Activated CD8-positive, alpha-beta T cell treated with anti-CD3 and anti-CD28 coated beads for 36 hours (primary cell): ENCODE measurements at regions of chr5 and their contacts with region 1.

Region 1: GRCh38 chr5:180831139-180832048 is 28.8 kb upstream of the MGAT1 start:
- DNase-seq: peak; percentile 83
- ATAC-seq: peak; percentile 72
- H3K4me3 Mint-ChIP-seq: peak overlapping the region; percentile 98
- H3K27ac Mint-ChIP-seq: peak overlapping the region; percentile 97
- H3K4me1 Mint-ChIP-seq: peaks cover 39% of the 10 kb centered on the region
- H3K27me3 Mint-ChIP-seq: no peaks in the 10 kb centered on the region
- CTCF ChIP-seq: no peak

Region 2: GRCh38 chr5:180704368-180704869 is 127.0 kb before region 1 on chr5:
- CTCF ChIA-PET with region 1: no interaction called
- POLR2A ChIA-PET with region 1: no interaction called
- intact Hi-C with region 1: no loop called
- DNase-seq: no peak
- ATAC-seq: no peak
- H3K4me3 Mint-ChIP-seq: no peak overlapping the region
- H3K27ac Mint-ChIP-seq: no peak overlapping the region
- H3K4me1 Mint-ChIP-seq: peaks cover 7% of the 10 kb centered on the region
- H3K27me3 Mint-ChIP-seq: no peaks in the 10 kb centered on the region
- CTCF ChIP-seq: no peak

Region 3: DNA sequence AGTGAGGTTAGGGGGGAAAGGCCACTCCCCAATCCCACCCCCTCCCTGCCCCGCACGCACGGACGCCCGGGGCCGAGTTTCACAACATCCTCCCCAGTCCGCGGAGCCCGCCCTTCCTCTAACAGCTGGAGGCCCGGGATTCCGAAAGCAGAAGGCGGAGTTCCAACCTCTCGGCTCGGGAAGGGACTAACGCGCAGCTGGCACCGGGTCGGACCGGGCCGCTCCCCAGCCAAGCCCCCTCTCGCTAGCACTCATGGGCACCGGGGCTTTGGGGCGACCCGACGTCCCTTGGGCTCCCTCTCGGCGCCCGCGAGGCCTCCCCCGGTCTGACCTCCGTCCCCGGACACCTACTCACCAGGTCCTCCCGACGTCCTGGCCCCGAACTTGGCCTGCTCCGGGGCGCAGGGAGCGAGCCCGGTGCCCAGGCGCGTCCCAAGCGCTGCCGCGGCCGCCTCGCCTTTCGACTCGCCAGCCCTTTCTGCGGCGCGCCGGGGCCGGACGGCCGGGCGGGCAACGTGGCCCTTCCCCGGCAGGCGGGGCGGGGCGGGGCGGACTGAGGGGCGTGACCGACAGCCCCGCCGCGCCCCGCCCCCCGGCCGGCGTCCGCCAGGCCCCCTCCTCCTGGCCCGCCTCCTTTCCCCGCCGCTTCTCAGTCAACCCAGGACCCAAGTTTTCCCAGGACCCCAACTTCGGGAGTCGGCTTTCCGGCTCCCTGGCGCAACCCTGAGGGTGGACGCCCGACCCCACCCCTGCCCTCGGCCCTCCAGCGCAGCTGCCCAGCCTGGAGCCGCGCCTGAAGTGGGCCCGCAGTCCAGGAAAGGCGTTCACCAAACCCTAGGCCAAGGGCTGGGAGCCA is 28.8 kb before region 1 on chr5 and contains the start of gene MGAT1:
- CTCF ChIA-PET with region 1: interaction called, 10 read pairs
- POLR2A ChIA-PET with region 1: interaction called, 87 read pairs
- intact Hi-C with region 1: loop called (anchors 5 kb)
- DNase-seq: peak; percentile 85
- ATAC-seq: peak; percentile 56
- H3K4me3 Mint-ChIP-seq: peak within 1 kb of the TSS; percentile 88
- H3K27ac Mint-ChIP-seq: peak within 1 kb of the TSS; percentile 99
- H3K4me1 Mint-ChIP-seq: peaks cover 70% of the 10 kb centered on the region
- H3K27me3 Mint-ChIP-seq: no peaks in the 10 kb centered on the region
- CTCF ChIP-seq: no peak
- total RNA-seq, gene MGAT1: 161 to 171 TPM

Region 4: DNA sequence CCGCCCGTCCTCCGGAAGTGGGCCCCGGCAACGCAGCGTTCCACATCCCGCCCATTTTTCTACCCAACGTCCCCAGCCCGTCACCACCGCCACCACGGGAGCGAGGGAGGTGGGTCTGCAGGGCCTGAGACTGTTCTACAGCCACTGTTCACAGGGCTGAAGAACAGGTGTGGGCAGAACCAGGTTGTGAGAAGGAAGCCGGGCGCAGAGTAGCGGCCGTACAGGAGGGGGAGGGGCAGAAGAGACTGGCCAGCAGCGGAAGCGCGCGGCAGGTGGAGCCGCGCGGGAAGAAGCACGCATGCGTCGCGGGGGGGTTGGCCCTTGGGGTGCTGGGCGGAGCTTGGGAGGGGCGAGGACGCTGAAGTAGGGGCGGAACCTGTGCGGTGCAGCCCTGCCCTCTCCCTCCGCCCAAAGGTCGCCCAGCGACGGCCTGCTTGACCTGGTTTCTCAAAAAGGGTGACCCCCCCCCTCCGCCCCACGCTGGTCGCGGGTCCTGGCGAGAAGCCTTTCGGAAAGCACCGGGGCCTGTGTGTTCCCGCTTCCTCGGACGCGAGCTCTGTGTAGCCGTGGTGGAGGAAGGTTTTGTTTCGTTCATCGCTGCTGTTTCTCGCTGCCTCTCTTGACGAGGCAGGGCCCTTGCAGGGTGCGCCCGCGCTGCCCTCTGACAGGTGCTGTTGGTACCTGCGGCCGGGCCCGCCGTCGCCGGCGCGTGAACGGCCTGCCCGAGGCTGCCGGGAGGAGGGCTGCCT is 21.0 kb before region 1 on chr5:
- CTCF ChIA-PET with region 1: interaction called, 32 read pairs
- POLR2A ChIA-PET with region 1: interaction called, 87 read pairs
- intact Hi-C with region 1: no loop called
- DNase-seq: peak; percentile 95
- ATAC-seq: peak; percentile 83
- H3K4me3 Mint-ChIP-seq: peak overlapping the region; percentile 88
- H3K27ac Mint-ChIP-seq: peak overlapping the region; percentile 99
- H3K4me1 Mint-ChIP-seq: peaks cover 57% of the 10 kb centered on the region
- H3K27me3 Mint-ChIP-seq: no peaks in the 10 kb centered on the region
- CTCF ChIP-seq: no peak

Region 5: GRCh38 chr5:180816608-180817534 is 14.5 kb before region 1 on chr5:
- CTCF ChIA-PET with region 1: interaction called, 32 read pairs
- POLR2A ChIA-PET with region 1: interaction called, 87 read pairs
- intact Hi-C with region 1: no loop called
- DNase-seq: no peak
- ATAC-seq: no peak
- H3K4me3 Mint-ChIP-seq: peak overlapping the region; percentile 50
- H3K27ac Mint-ChIP-seq: peak overlapping the region; percentile 63
- H3K4me1 Mint-ChIP-seq: peaks cover 57% of the 10 kb centered on the region
- H3K27me3 Mint-ChIP-seq: no peaks in the 10 kb centered on the region
- CTCF ChIP-seq: no peak